Left colon (tissue), 2 donors: ENCODE measurements at regions of chr6 and their contacts with region 1.

Region 1: GRCh38 chr6:138817822-138818308 is 22.0 kb downstream of the ECT2L start:
- DNase-seq: peak; percentile 84 to 91
- ATAC-seq: peak; percentile 94

Region 2: GRCh38 chr6:138987640-138988468 is 170.0 kb after region 1 on chr6 and contains the start of gene REPS1:
- intact Hi-C with region 1: loop called (anchors 5 to 10 kb)
- DNase-seq: peak; percentile 89 to 92
- ATAC-seq: peak; percentile 94
- total RNA-seq, gene REPS1: 30.2 to 33.2 TPM